Activated CD4-positive, alpha-beta T cell treated with anti-CD3 and anti-CD28 coated beads, Interleukin-2, amount 10 ng/mL, durations not matched to agents 24 days and 14 days (primary cell): ENCODE measurements at regions of chrX and their contacts with region 1.

Region 1: DNA sequence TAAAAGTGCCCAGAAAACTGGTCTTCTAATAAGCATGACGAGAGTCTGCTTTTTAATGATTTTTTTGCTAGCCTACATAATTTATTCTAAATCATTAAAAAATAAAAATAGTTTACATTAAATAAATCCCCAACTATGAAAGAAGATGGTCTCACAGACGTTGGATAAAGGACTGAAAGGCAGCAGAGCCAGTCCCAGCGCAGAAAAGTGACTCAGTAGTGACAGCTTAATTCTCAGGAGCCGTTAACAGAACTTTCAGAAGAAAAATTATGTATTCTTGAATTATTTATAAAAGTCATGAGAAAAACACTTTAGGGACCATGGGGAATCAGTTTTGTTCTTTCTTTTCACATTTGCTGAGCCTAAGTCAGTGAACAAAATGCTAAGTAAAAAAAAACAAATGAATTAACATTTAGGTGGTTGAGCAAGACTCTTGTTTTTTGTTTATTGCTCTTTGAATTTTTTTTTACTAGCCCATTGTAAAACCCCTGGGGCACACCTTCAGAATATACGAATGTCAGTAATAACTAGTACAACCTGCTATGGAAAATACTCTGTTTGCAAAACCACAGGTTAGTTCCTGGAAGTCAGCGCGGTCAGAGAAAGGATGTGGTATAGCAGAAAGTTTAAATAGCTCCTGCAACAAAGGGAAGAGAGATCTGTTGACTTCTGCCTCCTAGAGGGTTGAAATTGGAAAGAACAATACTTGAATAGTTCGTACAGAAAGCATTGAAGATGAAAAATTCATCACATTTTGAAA is 50.4 kb upstream of the CCDC160 start:
- DNase-seq: peak; percentile 92
- H3K4me3 Mint-ChIP-seq: peak overlapping the region; percentile 86
- H3K27ac Mint-ChIP-seq: peak overlapping the region; percentile 85
- H3K4me1 Mint-ChIP-seq: peaks cover 22% of the 10 kb centered on the region
- H3K27me3 Mint-ChIP-seq: no peaks in the 10 kb centered on the region

Region 2: DNA sequence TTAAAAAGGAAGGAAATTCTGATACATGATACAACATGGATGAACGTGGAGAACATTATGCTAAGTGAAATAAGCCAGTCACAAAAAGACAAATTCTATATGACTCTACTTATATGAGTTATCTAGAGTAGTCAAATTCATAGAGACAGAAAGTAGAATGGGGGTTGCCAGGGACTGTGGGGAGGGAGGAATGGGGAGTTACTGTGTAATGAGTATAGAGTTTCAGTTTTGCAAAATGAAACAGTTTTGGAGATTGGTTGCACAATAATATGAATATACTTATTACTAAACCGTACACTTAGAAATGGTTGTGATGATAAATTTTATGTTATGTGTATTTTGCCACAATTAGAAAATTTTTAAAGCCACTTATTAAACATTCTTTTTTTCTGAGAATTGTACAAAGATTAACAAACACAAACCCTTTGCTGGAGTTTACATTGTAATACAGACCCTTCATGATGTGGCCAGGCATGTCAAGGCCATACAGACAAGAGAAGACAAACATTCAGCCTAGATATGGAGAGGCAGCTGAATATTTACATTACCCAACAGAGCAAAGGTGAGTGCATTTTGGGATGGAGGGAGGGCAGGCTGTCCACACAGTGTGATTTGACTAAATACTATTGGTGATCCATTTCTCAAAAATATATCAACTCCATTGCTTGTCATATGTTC is 179.9 kb before region 1 on chrX:
- intact Hi-C with region 1: loop called (anchors 5 kb)
- DNase-seq: no peak
- H3K4me3 Mint-ChIP-seq: no peak overlapping the region
- H3K27ac Mint-ChIP-seq: no peak overlapping the region
- H3K4me1 Mint-ChIP-seq: no peaks in the 10 kb centered on the region
- H3K27me3 Mint-ChIP-seq: no peaks in the 10 kb centered on the region

Region 3: GRCh38 chrX:134158821-134159512 is 27.6 kb before region 1 on chrX:
- intact Hi-C with region 1: loop called (anchors 1 kb)
- DNase-seq: no peak
- H3K4me3 Mint-ChIP-seq: no peak overlapping the region
- H3K27ac Mint-ChIP-seq: peak overlapping the region; percentile 83
- H3K4me1 Mint-ChIP-seq: peaks cover 23% of the 10 kb centered on the region
- H3K27me3 Mint-ChIP-seq: no peaks in the 10 kb centered on the region

Region 4: GRCh38 chrX:134236626-134237614 is 50.4 kb after region 1 on chrX and contains the start of gene CCDC160:
- intact Hi-C with region 1: loop called (anchors 5 kb)
- DNase-seq: peak; percentile 72
- H3K4me3 Mint-ChIP-seq: peak within 1 kb of the TSS; percentile 59
- H3K27ac Mint-ChIP-seq: no peak within 1 kb of the TSS
- H3K4me1 Mint-ChIP-seq: peaks cover 11% of the 10 kb centered on the region
- H3K27me3 Mint-ChIP-seq: peaks cover 2% of the 10 kb centered on the region
- total RNA-seq, gene CCDC160: not detected in 2 replicates

Region 5: DNA sequence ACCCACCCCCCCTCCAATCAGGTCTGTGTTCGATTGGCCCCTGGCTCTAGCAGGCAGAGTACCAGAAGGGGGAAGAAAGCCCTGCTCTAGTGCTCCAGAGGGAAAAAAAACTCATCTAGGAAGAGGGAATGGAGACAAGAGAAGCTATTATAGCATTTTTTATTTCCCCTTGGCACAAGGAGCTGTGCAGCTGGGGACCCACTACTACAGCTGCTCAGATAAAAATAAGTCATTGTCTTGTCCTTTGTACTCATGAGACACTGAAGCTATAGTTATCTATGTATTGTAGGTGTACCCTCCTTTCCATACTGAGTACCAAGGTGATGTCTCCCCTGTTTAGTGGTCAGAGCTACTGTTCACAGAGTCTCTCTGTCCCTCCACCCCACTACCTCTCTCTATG is 64.7 kb after region 1 on chrX:
- intact Hi-C with region 1: no loop called
- DNase-seq: no peak
- H3K4me3 Mint-ChIP-seq: no peak overlapping the region
- H3K27ac Mint-ChIP-seq: no peak overlapping the region
- H3K4me1 Mint-ChIP-seq: peaks cover 5% of the 10 kb centered on the region
- H3K27me3 Mint-ChIP-seq: no peaks in the 10 kb centered on the region